CD8-positive, alpha-beta T cell (primary cell): ENCODE measurements at regions of chr22 and their contacts with region 1.

Region 1: GRCh38 chr22:29040385-29041275 is 21.0 kb downstream of the C22orf31 start:
- DNase-seq: peak; percentile 22 to 82 (median 65)
- ATAC-seq: peak; percentile 63
- H3K4me3 ChIP-seq: no peak overlapping the region
- H3K4me3 Mint-ChIP-seq: no peak overlapping the region
- H3K27ac ChIP-seq: no peak overlapping the region
- H3K27ac Mint-ChIP-seq: no peak overlapping the region
- H3K4me1 ChIP-seq: no peaks in the 10 kb centered on the region
- H3K4me1 Mint-ChIP-seq: peaks cover 3% of the 10 kb centered on the region
- H3K27me3 ChIP-seq: peaks cover 0 to 4% of the 10 kb centered on the region in 2 experiments
- H3K27me3 Mint-ChIP-seq: peaks cover 7% of the 10 kb centered on the region
- CTCF ChIP-seq: peak; percentile 97

Region 2: GRCh38 chr22:28600546-28601143 is 440.0 kb before region 1 on chr22:
- CTCF ChIA-PET with region 1: interaction called, 63 read pairs
- POLR2A ChIA-PET with region 1: no interaction called
- intact Hi-C with region 1: loop called (anchors 1 kb)
- DNase-seq: peak in 3 of 9 experiments; percentile 14 to 69 (median 58)
- ATAC-seq: peak; percentile 38
- H3K4me3 ChIP-seq: no peak overlapping the region
- H3K4me3 Mint-ChIP-seq: no peak overlapping the region
- H3K27ac ChIP-seq: no peak overlapping the region
- H3K27ac Mint-ChIP-seq: no peak overlapping the region
- H3K4me1 ChIP-seq: no peaks in the 10 kb centered on the region
- H3K4me1 Mint-ChIP-seq: no peaks in the 10 kb centered on the region
- H3K27me3 ChIP-seq: peaks cover 0 to 2% of the 10 kb centered on the region in 2 experiments
- H3K27me3 Mint-ChIP-seq: peaks cover 24% of the 10 kb centered on the region
- CTCF ChIP-seq: peak; percentile 58

Region 3: GRCh38 chr22:28855355-28856094 is 185.1 kb before region 1 on chr22:
- CTCF ChIA-PET with region 1: interaction called, 108 read pairs
- POLR2A ChIA-PET with region 1: interaction called, 3 read pairs
- intact Hi-C with region 1: loop called (anchors 1 kb)
- DNase-seq: peak; percentile 4 to 76 (median 37)
- ATAC-seq: peak; percentile 59
- H3K4me3 ChIP-seq: no peak overlapping the region
- H3K4me3 Mint-ChIP-seq: no peak overlapping the region
- H3K27ac ChIP-seq: no peak overlapping the region
- H3K27ac Mint-ChIP-seq: no peak overlapping the region
- H3K4me1 ChIP-seq: no peaks in the 10 kb centered on the region
- H3K4me1 Mint-ChIP-seq: no peaks in the 10 kb centered on the region
- H3K27me3 ChIP-seq: no peaks in the 10 kb centered on the region
- H3K27me3 Mint-ChIP-seq: peaks cover 9% of the 10 kb centered on the region
- CTCF ChIP-seq: peak; percentile 94

Region 4: DNA sequence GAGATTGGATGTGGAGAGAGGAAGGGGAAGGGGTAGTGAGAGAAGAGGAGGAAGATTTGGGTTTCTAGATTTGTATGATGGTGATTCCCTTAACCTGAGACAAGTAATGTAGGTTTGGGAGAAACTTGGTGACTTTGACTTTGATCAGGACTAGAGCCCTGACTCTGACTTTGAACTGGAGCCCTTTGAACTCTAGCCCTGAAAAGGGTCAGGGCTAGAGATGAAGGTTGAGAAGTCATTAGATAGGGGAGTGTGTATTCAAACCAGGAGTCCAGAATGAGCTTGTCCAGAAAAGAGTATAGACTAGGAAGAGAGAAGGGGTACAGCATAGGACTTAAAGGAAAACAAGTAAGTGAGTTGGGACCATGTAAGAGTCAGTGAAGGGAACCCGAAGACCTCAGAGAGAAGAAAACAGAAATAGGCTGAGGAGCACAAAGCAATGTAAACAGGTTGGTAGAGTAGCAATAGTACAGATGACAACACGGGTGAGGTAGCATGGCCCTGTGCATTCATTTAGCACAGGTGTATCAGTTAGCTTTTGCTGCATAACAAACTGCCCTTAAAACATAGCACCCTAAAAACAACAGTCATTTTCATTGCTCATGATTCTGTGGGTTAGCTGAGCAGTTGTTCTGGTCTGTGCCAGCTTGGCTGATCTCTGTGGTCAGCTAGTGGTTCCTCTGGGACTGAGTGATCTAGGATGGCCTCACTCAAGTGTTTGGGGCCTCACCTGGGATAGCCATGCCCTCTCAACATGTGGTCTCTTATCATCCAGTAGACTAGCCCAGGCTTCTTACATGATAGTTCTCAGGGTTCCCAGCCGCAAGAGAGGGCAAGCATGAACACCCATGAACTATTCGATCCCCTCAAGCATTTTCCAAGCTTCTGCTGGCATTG is 22.1 kb before region 1 on chr22:
- CTCF ChIA-PET with region 1: interaction called, 10 read pairs
- POLR2A ChIA-PET with region 1: no interaction called
- intact Hi-C with region 1: no loop called
- DNase-seq: no peak
- ATAC-seq: no peak
- H3K4me3 ChIP-seq: no peak overlapping the region
- H3K4me3 Mint-ChIP-seq: no peak overlapping the region
- H3K27ac ChIP-seq: no peak overlapping the region
- H3K27ac Mint-ChIP-seq: no peak overlapping the region
- H3K4me1 ChIP-seq: peaks cover 6% of the 10 kb centered on the region
- H3K4me1 Mint-ChIP-seq: peaks cover 14% of the 10 kb centered on the region
- H3K27me3 ChIP-seq: no peaks in the 10 kb centered on the region
- H3K27me3 Mint-ChIP-seq: peaks cover 17% of the 10 kb centered on the region
- CTCF ChIP-seq: no peak

Region 5: DNA sequence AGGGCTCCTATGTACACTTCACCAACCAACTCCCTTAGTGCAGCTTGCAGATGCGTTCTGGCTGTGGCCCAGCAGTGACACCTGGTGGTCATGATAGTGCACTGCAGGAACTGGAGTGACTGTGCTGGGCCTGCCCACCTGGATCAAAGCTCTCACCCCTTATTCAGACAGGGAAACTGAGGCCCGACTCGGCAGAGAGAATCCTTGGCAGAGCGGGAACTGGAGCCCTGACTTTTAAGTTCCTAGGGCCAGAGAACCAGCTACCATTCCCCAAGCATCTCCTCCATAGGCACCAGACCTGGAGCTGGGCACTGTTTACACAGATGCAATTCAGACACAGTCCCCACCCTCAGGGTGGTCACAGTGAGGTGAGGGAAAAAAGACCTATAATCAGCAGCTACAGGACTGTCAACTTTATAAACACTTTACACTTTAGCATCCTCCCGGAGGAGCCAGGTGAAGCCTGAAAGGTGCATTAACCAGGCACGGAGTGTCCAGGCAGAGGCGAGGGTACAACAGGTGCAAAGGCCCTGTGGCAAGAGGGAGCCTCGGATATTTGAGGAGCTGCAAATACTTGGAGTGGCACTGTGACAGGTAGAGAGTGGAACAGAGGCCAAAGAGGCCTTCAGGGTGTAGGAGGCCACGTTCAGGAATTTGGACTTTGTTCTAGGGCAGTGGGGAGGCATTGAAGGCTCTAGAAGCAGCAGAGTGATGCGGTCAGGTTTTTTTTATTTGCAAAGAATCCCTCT is 205.2 kb after region 1 on chr22:
- CTCF ChIA-PET with region 1: interaction called, 13 read pairs
- POLR2A ChIA-PET with region 1: no interaction called
- intact Hi-C with region 1: no loop called
- DNase-seq: peak; percentile 43 to 79 (median 66)
- ATAC-seq: peak; percentile 91
- H3K4me3 ChIP-seq: no peak overlapping the region
- H3K4me3 Mint-ChIP-seq: no peak overlapping the region
- H3K27ac ChIP-seq: no peak overlapping the region
- H3K27ac Mint-ChIP-seq: no peak overlapping the region
- H3K4me1 ChIP-seq: no peaks in the 10 kb centered on the region
- H3K4me1 Mint-ChIP-seq: no peaks in the 10 kb centered on the region
- H3K27me3 ChIP-seq: no peaks in the 10 kb centered on the region
- H3K27me3 Mint-ChIP-seq: peaks cover 20% of the 10 kb centered on the region
- CTCF ChIP-seq: peak; percentile 90